ENCODE measurements at regions of chrX and their contacts with region 1.

Region 1: GRCh38 chrX:24395775-24396174 is 35.3 kb downstream of the SUPT20HL1 start:
- DNase-seq: no peak
- ATAC-seq: peak; percentile 92
- H3K4me3 ChIP-seq: no peak overlapping the region
- H3K27ac ChIP-seq: no peak overlapping the region
- H3K4me1 ChIP-seq: peaks cover 5% of the 10 kb centered on the region
- H3K27me3 ChIP-seq: no peaks in the 10 kb centered on the region
- CTCF ChIP-seq: peak; percentile 65

Region 2: GRCh38 chrX:24137192-24137591 is 258.6 kb before region 1 on chrX:
- intact Hi-C with region 1: no loop called
- DNase-seq: no peak
- ATAC-seq: no peak
- H3K4me3 ChIP-seq: no peak overlapping the region
- H3K27ac ChIP-seq: no peak overlapping the region
- H3K4me1 ChIP-seq: no peaks in the 10 kb centered on the region
- H3K27me3 ChIP-seq: no peaks in the 10 kb centered on the region
- CTCF ChIP-seq: no peak

Region 3: GRCh38 chrX:24266996-24267395 is 128.8 kb before region 1 on chrX:
- intact Hi-C with region 1: no loop called
- DNase-seq: no peak
- ATAC-seq: no peak
- H3K4me3 ChIP-seq: no peak overlapping the region
- H3K27ac ChIP-seq: no peak overlapping the region
- H3K4me1 ChIP-seq: no peaks in the 10 kb centered on the region
- H3K27me3 ChIP-seq: no peaks in the 10 kb centered on the region
- CTCF ChIP-seq: no peak

Region 4: GRCh38 chrX:24506055-24506454 is 110.3 kb after region 1 on chrX:
- intact Hi-C with region 1: loop called (anchors 10 kb)
- DNase-seq: no peak
- ATAC-seq: no peak
- H3K4me3 ChIP-seq: no peak overlapping the region
- H3K27ac ChIP-seq: no peak overlapping the region
- H3K4me1 ChIP-seq: no peaks in the 10 kb centered on the region
- H3K27me3 ChIP-seq: no peaks in the 10 kb centered on the region
- CTCF ChIP-seq: no peak